Activated CD4-positive, alpha-beta memory T cell treated with anti-CD3 and anti-CD28 coated beads, Interleukin-2, amount 10 ng/mL, durations not matched to agents 7 days and 5 days (primary cell): ENCODE measurements at regions of chr7 and their contacts with region 1.

Region 1: DNA sequence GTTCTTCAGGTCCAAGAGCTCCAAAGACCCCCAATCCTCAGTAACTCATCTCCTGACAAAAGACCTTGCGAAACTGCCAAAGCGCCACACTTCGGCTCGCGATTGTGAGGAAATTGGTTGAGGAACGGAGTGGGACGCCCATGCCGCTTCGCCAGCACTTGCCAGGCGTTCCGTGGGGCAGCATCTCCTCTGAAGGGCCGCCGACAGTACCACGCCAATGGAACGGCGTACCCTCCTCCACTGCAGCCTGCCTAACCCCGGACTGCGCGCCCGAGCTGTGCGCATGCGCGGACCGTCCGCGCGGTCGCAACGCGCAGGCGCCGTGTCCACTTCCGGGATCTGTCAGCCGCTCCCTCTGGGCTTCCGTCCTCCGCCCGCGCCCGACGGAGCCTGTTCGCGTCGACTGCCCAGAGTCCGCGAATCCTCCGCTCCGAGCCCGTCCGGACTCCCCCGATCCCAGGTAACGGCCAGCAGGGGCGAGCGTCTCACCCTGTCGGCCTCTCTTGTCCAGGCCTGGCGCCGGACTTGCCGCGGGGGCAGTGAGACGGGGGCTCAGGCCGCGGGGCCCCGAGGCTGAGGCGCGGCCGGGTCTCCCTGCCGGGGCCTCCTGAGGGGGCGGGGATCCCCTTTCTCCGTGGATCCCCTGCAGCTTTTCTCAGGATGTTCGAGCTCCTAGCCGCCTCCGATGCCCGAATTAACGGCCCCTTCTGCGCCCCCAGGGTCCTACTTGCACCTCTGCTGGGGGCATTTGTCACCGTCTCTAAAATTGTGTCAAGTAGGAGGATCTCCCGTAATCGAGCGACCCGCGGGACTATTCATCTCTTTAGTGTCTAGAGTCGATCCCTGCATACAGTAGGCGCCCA is at the start of gene ARPC1A:
- DNase-seq: peak; percentile 93
- H3K4me3 Mint-ChIP-seq: peak within 1 kb of the TSS; percentile 93
- H3K27ac Mint-ChIP-seq: peak within 1 kb of the TSS; percentile 80
- H3K4me1 Mint-ChIP-seq: peaks cover 50% of the 10 kb centered on the region
- H3K27me3 Mint-ChIP-seq: peaks cover 2% of the 10 kb centered on the region
- total RNA-seq, gene ARPC1A: 63.8 to 68.9 TPM

Region 2: GRCh38 chr7:99290980-99291607 is 34.7 kb before region 1 on chr7:
- CTCF ChIA-PET with region 1: no interaction called
- POLR2A ChIA-PET with region 1: no interaction called
- DNase-seq: no peak
- H3K4me3 Mint-ChIP-seq: no peak overlapping the region
- H3K27ac Mint-ChIP-seq: no peak overlapping the region
- H3K4me1 Mint-ChIP-seq: no peaks in the 10 kb centered on the region
- H3K27me3 Mint-ChIP-seq: no peaks in the 10 kb centered on the region

Region 3: GRCh38 chr7:99312316-99313203 is 13.2 kb before region 1 on chr7:
- CTCF ChIA-PET with region 1: interaction called, 38 read pairs
- POLR2A ChIA-PET with region 1: interaction called, 34 read pairs
- DNase-seq: peak; percentile 79
- H3K4me3 Mint-ChIP-seq: peak overlapping the region; percentile 17
- H3K27ac Mint-ChIP-seq: no peak overlapping the region
- H3K4me1 Mint-ChIP-seq: peaks cover 28% of the 10 kb centered on the region
- H3K27me3 Mint-ChIP-seq: peaks cover 19% of the 10 kb centered on the region